ENCODE measurements at regions of chr16 and their contacts with region 1.

Region 1: DNA sequence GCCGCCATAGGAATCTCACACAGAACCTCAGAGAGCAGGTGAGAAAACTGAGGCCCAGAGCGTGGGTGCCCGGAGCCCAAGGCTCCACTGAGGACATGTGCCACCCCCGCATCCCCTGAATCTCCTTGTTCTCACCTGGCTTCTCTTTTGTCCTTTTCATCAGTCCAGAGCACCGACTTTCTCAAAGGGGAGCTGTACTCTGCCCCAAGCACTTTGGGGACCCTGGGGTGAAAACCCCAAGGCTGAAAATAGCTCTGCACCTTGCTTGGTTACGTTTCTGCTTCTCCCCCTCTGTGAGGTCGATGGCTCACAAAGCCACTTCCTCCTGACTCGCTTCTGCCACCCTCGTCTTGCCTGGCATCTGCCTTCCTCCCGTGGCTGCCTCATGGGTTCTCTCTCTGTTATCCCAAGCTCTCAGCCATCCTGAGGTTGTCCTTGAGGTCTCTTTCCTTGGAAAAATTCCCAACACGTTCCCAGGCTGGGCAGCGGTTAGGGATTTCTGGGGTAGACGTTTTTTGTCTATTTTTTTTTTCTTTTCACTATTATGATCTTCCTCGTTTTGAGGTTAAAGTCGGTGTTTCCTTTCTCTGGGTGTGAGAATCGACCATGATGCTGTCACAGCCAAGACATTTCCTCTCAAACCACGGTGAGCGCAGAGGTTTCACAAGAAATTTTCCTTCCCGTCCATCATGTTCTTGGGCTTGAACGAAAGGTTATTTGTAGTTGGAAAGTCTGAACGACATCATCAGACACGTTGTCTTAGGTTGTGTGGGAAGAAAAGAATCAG is 37.2 kb downstream of the IRF8 start:
- DNase-seq: peak; percentile 93
- ATAC-seq: peak; percentile 84
- H3K4me3 Mint-ChIP-seq: peak overlapping the region; percentile 64
- H3K27ac Mint-ChIP-seq: peak overlapping the region; percentile 99
- H3K4me1 Mint-ChIP-seq: peaks cover 72% of the 10 kb centered on the region
- H3K27me3 Mint-ChIP-seq: no peaks in the 10 kb centered on the region
- CTCF ChIP-seq: no peak

Region 2: DNA sequence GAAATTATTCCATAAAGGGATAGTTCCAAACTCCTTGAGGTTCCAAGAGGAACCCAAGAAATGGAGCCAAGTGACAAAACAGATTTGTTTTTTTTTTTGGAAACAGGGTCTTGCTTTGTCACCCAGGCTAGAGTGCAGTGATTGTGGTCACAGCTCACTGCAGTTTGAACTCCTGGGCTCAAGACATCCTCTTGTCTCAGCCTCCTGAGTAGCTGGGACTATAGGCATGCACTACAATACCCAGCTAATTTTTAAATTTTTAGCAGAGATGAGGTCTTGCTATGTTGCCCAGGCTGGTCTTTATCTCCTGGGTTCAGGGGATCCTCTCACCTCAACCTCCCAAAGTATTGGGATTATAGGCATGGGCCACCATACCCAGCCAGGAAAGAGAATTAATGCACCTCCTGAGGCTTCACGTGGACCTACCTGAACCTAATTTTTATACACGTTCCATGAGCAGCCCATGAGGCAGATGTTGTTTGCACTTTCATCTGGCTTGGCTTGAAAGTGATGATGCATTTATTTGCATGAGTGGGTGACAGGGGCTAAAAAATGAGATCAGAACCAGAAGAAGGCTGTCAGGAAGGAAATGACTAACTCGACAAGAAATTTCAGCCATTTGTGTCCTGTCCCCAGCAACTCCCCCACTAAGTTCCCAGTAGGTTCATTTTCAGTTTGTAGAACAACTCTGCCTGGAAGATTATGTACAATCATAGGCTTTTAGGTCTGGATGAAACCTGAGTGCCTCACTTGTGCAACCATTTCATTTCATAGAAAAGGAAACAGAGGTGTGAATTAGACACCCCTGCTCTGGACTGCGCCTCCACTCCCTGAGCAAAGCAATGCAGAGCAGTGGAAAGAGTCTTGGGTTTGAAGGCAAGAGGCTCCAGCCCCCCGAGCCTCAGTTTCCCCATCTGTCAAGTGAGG is 47.5 kb before region 1 on chr16:
- CTCF ChIA-PET with region 1: no interaction called
- POLR2A ChIA-PET with region 1: no interaction called
- intact Hi-C with region 1: loop called (anchors 5 kb)
- DNase-seq: peak; percentile 72
- ATAC-seq: peak; percentile 93
- H3K4me3 Mint-ChIP-seq: peak overlapping the region; percentile 15
- H3K27ac Mint-ChIP-seq: peak overlapping the region; percentile 79
- H3K4me1 Mint-ChIP-seq: peaks cover 35% of the 10 kb centered on the region
- H3K27me3 Mint-ChIP-seq: peaks cover 9% of the 10 kb centered on the region
- CTCF ChIP-seq: no peak

Region 3: GRCh38 chr16:85916141-85916890 is 19.9 kb before region 1 on chr16:
- CTCF ChIA-PET with region 1: interaction called, 3 read pairs
- POLR2A ChIA-PET with region 1: interaction called, 10 read pairs
- intact Hi-C with region 1: no loop called
- DNase-seq: no peak
- ATAC-seq: no peak
- H3K4me3 Mint-ChIP-seq: no peak overlapping the region
- H3K27ac Mint-ChIP-seq: peak overlapping the region; percentile 44
- H3K4me1 Mint-ChIP-seq: peaks cover 31% of the 10 kb centered on the region
- H3K27me3 Mint-ChIP-seq: no peaks in the 10 kb centered on the region
- CTCF ChIP-seq: no peak

Region 4: GRCh38 chr16:85947230-85948137 is 11.3 kb after region 1 on chr16:
- CTCF ChIA-PET with region 1: interaction called, 4 read pairs
- POLR2A ChIA-PET with region 1: interaction called, 13 read pairs
- intact Hi-C with region 1: no loop called
- DNase-seq: peak; percentile 78
- ATAC-seq: peak; percentile 78
- H3K4me3 Mint-ChIP-seq: peak overlapping the region; percentile 53
- H3K27ac Mint-ChIP-seq: peak overlapping the region; percentile 96
- H3K4me1 Mint-ChIP-seq: peaks cover 75% of the 10 kb centered on the region
- H3K27me3 Mint-ChIP-seq: no peaks in the 10 kb centered on the region
- CTCF ChIP-seq: no peak

Region 5: DNA sequence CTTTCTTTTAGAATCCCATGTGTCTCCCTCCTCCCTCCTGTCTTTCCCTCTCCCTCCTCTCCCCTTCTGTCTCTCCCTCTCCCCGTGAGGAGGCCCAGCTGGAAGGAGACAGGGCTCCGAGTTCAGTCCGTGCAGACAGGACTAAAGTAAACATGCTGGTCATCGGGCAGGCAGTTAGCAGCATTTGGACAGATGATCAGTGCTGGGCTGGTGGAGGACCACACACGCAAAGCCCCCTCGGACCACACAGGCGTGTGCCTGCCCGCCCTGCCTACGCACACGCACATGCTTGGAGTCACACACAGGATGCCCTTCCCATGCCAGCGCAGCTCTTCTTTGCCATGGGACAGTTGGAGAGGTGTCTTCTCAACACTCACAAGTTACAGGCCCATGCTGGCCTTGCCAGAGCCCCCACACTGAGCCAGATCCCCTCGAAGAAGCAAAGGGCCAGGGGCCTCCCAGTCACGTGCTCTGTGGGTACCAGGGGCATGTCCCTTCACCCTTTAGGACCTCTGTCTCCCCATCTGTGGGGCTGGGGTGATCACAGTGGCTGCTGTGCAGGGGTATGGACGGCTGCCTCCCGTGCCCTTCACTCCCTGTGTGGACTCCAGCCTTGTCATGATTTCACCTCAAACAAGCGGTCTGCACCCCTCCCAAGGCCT is 358.5 kb after region 1 on chr16:
- CTCF ChIA-PET with region 1: no interaction called
- POLR2A ChIA-PET with region 1: no interaction called
- intact Hi-C with region 1: no loop called
- DNase-seq: no peak
- ATAC-seq: no peak
- H3K4me3 Mint-ChIP-seq: no peak overlapping the region
- H3K27ac Mint-ChIP-seq: no peak overlapping the region
- H3K4me1 Mint-ChIP-seq: no peaks in the 10 kb centered on the region
- H3K27me3 Mint-ChIP-seq: peaks cover 58% of the 10 kb centered on the region
- CTCF ChIP-seq: no peak